Natural killer cell (primary cell): ENCODE measurements at regions of chr10 and their contacts with region 1.

Region 1: DNA sequence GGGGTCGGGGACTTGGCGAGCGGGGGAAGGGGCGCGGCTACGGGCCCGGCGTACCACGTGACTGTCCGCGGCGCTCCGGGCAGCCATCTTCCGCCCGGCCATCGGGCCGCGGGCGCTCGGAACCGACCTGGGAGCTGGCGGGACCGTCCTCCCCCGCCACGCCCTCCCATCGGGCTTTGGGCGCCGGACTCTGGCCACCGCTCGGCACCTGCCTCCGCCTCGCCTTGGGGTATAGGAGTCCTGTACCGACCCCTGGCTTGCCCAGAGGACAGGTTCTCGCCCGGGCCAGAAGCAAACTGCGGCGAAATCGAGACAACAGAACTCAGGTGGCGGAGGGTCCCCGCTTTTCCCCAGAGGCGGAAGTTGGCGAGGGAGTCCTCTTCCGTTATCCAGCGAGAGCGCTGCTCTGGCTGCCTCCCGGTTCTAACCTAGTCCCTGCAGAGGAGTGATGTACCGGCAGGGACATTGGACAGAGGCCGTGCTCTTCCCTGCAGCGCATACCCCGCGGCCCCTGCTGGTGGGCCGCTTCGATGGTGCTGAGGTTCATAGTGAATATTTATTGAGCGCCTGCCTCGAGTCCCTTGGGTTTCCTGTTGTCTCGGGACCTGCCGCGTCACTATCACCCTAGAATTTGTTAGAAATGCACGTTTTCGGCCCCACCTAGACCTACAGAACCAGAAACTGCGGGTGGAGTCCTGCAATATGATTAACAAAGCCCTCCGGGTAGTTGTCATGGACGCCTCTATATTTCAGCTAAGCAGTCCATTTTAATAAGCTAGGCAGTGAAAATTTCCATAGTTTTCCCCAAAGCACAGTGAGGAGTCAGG is 1.3 kb upstream of the SGMS1 start:
- DNase-seq: peak; percentile 66 to 83
- ATAC-seq: peak; percentile 41 to 55 (median 50)
- H3K4me3 ChIP-seq: peak overlapping the region; percentile 78
- H3K4me3 Mint-ChIP-seq: peak overlapping the region; percentile 91
- H3K27ac ChIP-seq: peak overlapping the region; percentile 90
- H3K27ac Mint-ChIP-seq: peak overlapping the region; percentile 94 to 95
- H3K4me1 ChIP-seq: peaks cover 25% of the 10 kb centered on the region
- H3K4me1 Mint-ChIP-seq: peaks cover 28 to 32% of the 10 kb centered on the region in 2 donors
- H3K27me3 ChIP-seq: no peaks in the 10 kb centered on the region
- H3K27me3 Mint-ChIP-seq: no peaks in the 10 kb centered on the region
- CTCF ChIP-seq: no peak

Region 2: DNA sequence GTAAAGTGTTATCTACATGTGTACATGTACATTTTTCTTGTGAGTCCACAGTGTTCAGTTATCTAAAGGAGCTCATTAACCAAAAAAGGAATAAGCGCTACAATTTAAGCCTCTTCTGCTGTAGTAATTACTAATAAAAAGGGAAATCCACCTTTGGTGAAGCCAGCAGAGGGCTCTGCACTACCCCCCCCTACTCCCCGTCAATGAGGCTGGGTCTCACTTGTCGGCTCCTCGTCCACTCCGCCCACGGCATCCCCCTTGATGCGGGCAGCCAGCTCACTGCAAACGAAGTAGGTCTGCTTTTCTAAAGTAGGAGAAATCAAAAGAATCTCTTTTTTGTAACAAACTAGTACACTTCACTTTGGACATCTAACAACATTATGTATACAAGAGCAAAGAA is 562.0 kb before region 1 on chr10:
- intact Hi-C with region 1: loop called (anchors 10 kb)
- DNase-seq: no peak
- ATAC-seq: no peak
- H3K4me3 ChIP-seq: no peak overlapping the region
- H3K4me3 Mint-ChIP-seq: no peak overlapping the region
- H3K27ac ChIP-seq: no peak overlapping the region
- H3K27ac Mint-ChIP-seq: no peak overlapping the region
- H3K4me1 ChIP-seq: peaks cover 4% of the 10 kb centered on the region
- H3K4me1 Mint-ChIP-seq: no peaks in the 10 kb centered on the region
- H3K27me3 ChIP-seq: no peaks in the 10 kb centered on the region
- H3K27me3 Mint-ChIP-seq: no peaks in the 10 kb centered on the region
- CTCF ChIP-seq: no peak

Region 3: GRCh38 chr10:50527442-50528043 is 97.5 kb before region 1 on chr10:
- intact Hi-C with region 1: loop called (anchors 2 kb)
- DNase-seq: peak in 1 of 2 donors; percentile 59
- ATAC-seq: peak; percentile 93 to 95 (median 93)
- H3K4me3 ChIP-seq: no peak overlapping the region
- H3K4me3 Mint-ChIP-seq: peak overlapping the region; percentile 43
- H3K27ac ChIP-seq: peak overlapping the region; percentile 42
- H3K27ac Mint-ChIP-seq: peak overlapping the region; percentile 83 to 85
- H3K4me1 ChIP-seq: peaks cover 13% of the 10 kb centered on the region
- H3K4me1 Mint-ChIP-seq: peaks cover 32 to 42% of the 10 kb centered on the region in 2 donors
- H3K27me3 ChIP-seq: no peaks in the 10 kb centered on the region
- H3K27me3 Mint-ChIP-seq: no peaks in the 10 kb centered on the region
- CTCF ChIP-seq: no peak

Region 4: GRCh38 chr10:50552771-50553535 is 72.1 kb before region 1 on chr10:
- intact Hi-C with region 1: loop called (anchors 2 kb)
- DNase-seq: peak; percentile 29 to 71
- ATAC-seq: peak; percentile 95 to 99 (median 98)
- H3K4me3 ChIP-seq: no peak overlapping the region
- H3K4me3 Mint-ChIP-seq: no peak overlapping the region
- H3K27ac ChIP-seq: no peak overlapping the region
- H3K27ac Mint-ChIP-seq: peak overlapping the region; percentile 5 to 56
- H3K4me1 ChIP-seq: no peaks in the 10 kb centered on the region
- H3K4me1 Mint-ChIP-seq: peaks cover 35 to 38% of the 10 kb centered on the region in 2 donors
- H3K27me3 ChIP-seq: no peaks in the 10 kb centered on the region
- H3K27me3 Mint-ChIP-seq: no peaks in the 10 kb centered on the region
- CTCF ChIP-seq: peak; percentile 54

Region 5: DNA sequence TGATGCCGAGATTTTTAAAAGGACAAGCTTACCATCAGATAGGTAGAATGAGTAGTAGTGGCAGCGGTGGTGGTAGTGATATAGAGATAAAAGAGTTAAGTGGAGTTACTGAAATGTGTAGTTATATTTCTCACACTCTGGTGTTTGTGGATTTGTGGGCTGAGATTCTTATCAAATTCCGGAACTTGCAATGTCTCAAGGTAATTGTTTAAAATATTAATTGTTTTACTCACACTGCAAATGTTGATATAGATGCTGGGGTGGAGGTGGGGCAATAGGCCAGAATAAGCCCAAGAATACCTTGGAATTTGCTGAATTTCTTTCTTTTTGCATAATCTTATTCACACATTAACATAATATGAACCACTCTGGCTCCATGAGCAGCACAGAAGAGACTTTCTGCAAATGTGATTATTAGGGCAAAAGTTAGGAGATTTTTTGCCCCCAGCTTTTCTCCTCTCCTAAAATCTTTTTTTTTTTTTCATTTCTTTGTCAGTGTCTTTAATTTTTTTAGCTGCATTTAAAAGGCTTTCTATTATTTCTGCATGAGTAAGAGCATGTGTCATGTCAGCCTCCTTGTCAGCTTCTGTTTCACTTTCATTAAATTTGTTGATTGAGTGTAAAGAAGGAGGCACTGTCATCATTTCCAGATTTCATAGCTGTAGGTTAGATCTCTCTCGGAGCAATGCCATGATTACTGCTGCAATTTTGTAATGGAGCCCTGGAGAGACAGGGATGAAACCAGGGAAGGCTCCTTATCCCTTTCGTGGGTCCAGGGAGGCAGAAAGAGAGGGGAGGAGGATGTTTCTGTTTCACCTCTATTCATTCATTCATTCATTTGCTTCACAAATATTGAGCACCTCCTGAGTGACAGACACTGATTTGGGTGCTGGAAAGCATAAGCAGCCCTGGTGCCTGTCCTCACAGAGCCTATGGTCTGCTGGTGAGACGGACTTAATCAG is 11.8 kb after region 1 on chr10:
- intact Hi-C with region 1: loop called (anchors 1 kb)
- DNase-seq: peak in 1 of 2 donors; percentile 68
- ATAC-seq: peak; percentile 87 to 90 (median 89)
- H3K4me3 ChIP-seq: peak overlapping the region; percentile 28
- H3K4me3 Mint-ChIP-seq: peak overlapping the region; percentile 90
- H3K27ac ChIP-seq: peak overlapping the region; percentile 25
- H3K27ac Mint-ChIP-seq: peak overlapping the region; percentile 78 to 89
- H3K4me1 ChIP-seq: peaks cover 16% of the 10 kb centered on the region
- H3K4me1 Mint-ChIP-seq: peaks cover 26 to 34% of the 10 kb centered on the region in 2 donors
- H3K27me3 ChIP-seq: peaks cover 6% of the 10 kb centered on the region
- H3K27me3 Mint-ChIP-seq: peaks cover 0 to 16% of the 10 kb centered on the region in 2 donors
- CTCF ChIP-seq: no peak

Region 6: DNA sequence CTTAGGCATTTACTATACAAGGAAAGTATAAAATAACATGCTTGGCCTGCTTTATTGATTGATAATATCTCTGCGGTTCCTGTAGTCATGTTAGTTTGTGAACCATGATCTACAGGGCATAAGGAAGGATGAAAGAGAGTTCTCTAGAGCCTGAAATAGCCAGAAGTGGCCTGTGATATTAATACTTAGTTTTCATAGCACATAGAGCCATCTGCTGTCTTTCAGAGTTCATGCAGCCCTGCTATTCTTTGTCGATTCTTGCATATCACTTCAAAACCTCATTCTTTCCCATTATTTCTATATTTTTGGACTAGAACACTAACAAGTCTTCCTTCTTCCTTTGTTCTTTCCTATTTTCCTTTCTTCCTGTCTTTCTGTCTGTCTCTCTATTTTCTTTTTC is 422.8 kb after region 1 on chr10:
- intact Hi-C with region 1: no loop called
- DNase-seq: no peak
- ATAC-seq: no peak
- H3K4me3 ChIP-seq: no peak overlapping the region
- H3K4me3 Mint-ChIP-seq: no peak overlapping the region
- H3K27ac ChIP-seq: no peak overlapping the region
- H3K27ac Mint-ChIP-seq: no peak overlapping the region
- H3K4me1 ChIP-seq: no peaks in the 10 kb centered on the region
- H3K4me1 Mint-ChIP-seq: no peaks in the 10 kb centered on the region
- H3K27me3 ChIP-seq: no peaks in the 10 kb centered on the region
- H3K27me3 Mint-ChIP-seq: peaks cover 0 to 3% of the 10 kb centered on the region in 2 donors
- CTCF ChIP-seq: no peak

Region 7: DNA sequence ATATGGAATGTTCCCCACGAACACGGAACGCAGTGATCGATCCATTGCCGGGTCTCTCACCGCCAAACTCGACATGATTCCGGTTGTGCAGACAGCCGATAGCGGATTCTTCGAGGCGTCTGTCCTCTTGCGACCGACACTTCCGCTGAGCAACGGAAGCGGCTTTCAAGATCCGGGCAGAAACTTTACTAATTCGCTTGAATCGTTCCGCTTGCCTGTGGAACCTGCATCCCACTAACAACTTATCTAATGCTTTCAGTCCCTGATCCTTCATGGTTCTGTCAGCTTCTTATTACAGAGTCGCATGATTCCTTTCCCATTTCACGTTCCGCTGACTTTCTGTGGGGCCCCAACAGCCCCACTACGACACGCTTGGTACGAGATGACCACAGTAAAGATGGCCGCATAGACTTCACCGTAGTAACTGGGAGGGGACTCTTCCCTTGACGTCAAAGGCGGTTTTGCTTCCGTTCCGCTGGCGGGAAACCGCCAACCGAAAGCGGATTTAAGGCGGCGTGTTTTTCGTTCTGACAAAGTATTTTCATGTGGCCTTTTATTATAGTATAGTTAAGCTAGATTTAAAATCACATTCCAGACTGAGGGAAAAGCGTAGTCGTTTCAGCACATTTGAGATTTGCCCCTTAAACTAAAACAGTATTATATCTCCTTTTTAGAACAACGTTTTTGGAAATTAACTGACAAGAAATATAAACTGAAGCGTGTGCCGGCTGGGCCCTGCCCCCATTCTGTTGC is 1074.6 kb after region 1 on chr10 and contains the start of gene CSTF2T:
- intact Hi-C with region 1: loop called (anchors 10 kb)
- DNase-seq: peak; percentile 90 to 98
- ATAC-seq: peak; percentile 86 to 94 (median 90)
- H3K4me3 ChIP-seq: peak within 1 kb of the TSS; percentile 78
- H3K4me3 Mint-ChIP-seq: peak within 1 kb of the TSS; percentile 99
- H3K27ac ChIP-seq: peak within 1 kb of the TSS; percentile 93
- H3K27ac Mint-ChIP-seq: peak within 1 kb of the TSS; percentile 98 to 100
- H3K4me1 ChIP-seq: peaks cover 24% of the 10 kb centered on the region
- H3K4me1 Mint-ChIP-seq: peaks cover 50 to 53% of the 10 kb centered on the region in 2 donors
- H3K27me3 ChIP-seq: no peaks in the 10 kb centered on the region
- H3K27me3 Mint-ChIP-seq: no peaks in the 10 kb centered on the region
- CTCF ChIP-seq: no peak
- total RNA-seq, gene CSTF2T: 29.8 to 34.8 (median 32.8) TPM